CD14-positive monocyte (primary cell): ENCODE measurements at regions of chr2 and their contacts with region 1.

Region 1: DNA sequence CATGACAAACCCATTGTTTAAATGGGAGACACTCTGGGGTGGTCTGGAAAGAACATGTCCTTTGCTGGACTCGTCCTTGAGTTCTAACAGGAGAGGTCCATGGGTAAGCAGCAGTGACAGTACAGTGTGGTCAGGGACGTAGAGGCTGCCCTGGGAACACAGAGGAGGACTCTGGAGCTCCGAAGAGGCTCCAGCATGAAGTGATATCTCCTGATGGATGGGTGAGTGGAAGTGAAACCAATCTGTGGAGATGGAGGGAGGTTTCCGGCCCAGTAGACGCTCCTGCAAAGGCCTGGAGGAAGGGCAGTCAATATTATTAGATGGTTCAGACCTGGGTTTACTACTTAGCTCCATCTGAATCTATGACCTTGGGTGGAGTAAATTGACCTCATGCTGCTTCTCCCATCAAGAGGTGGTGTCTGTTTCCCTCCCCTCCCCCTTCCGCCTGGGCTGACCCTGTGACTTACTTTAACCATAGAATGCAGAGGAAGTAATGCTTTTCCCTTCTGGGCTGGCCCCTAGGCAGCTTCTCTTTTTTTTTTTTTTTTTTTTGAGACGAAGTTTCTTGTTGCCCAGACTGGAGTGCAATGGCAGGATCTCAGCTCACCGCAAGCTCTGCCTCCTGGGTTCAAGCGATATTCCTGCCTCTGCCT is 2.3 kb upstream of the TFCP2L1 start:
- DNase-seq: peak; percentile 71 to 76 (median 71)
- H3K4me3 ChIP-seq: peak overlapping the region in 2 of 3 experiments; percentile 7 to 56
- H3K4me3 Mint-ChIP-seq: peak overlapping the region; percentile 70 to 85
- H3K27ac ChIP-seq: peak overlapping the region; percentile 34 to 52
- H3K27ac Mint-ChIP-seq: peak overlapping the region; percentile 68 to 87 (median 84)
- H3K4me1 ChIP-seq: peaks cover 47 to 50% of the 10 kb centered on the region in 2 donors
- H3K4me1 Mint-ChIP-seq: peaks cover 57% of the 10 kb centered on the region
- H3K27me3 ChIP-seq: peaks cover 20 to 37% of the 10 kb centered on the region in 2 donors
- H3K27me3 Mint-ChIP-seq: peaks cover 36 to 44% (median 42%) of the 10 kb centered on the region in 3 donors
- CTCF ChIP-seq: no peak

Region 2: DNA sequence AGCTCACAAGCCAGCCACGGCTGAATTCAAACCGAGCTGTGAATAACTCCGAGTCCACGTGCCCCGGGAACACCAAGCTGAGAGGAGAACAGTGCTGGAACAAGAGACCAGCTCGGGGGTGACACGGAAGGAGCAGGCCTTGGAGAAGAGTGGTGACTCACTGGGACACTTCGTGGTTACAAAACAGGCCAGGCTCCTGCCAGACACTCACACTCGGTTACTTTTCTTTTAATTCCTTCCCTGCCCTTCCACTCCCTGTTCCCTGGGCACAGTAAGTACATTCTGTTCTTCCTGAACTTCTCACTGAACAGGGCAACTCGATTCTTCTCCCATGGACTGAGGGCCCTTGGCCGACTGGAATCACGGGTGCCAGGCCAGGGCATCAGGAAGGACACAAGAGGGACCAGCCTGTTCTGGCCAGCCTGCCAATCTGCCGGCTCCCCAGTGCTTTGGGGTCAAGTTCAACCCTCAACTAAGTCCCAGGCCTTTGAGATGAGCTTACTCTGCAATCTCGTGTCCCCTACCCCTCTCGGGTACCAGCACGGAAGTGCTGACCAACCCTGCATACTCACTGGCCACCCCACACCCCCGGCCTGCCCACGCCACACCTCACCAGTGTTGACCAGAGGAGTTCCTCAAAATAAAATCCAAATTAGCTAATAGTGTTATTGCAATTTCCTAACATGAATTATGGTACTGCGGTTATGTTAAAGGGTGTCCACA is 89.7 kb before region 1 on chr2:
- intact Hi-C with region 1: loop called in 1 of 2 experiments (anchors 2 kb)
- DNase-seq: peak; percentile 92 to 96 (median 93)
- H3K4me3 ChIP-seq: peak overlapping the region in 2 of 3 experiments; percentile 1 to 42
- H3K4me3 Mint-ChIP-seq: peak overlapping the region; percentile 58 to 84
- H3K27ac ChIP-seq: peak overlapping the region; percentile 100
- H3K27ac Mint-ChIP-seq: peak overlapping the region; percentile 99 to 100 (median 100)
- H3K4me1 ChIP-seq: peaks cover 51 to 72% of the 10 kb centered on the region in 2 donors
- H3K4me1 Mint-ChIP-seq: peaks cover 72% of the 10 kb centered on the region
- H3K27me3 ChIP-seq: no peaks in the 10 kb centered on the region
- H3K27me3 Mint-ChIP-seq: peaks cover 4 to 10% (median 8%) of the 10 kb centered on the region in 3 donors
- CTCF ChIP-seq: no peak

Region 3: DNA sequence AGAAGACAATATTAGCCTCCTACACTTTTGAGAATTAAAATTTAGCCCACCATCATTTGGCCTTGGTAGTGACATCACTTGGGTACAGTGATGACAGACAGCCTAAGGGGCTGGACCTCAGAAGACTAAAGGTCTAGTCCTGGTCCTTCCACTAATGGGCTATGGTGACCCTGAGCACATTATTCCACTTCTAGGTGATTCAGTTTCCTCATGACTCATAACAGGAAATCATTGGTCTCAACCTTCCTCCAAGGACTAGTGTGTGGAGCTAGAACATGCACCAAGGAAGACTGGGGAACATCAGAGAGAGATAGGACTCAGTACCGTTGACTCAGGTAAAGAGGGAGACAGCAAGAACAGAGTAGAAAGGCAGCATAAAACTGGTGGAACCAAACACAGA is 66.3 kb before region 1 on chr2:
- intact Hi-C with region 1: no loop called
- DNase-seq: peak in 2 of 3 donors; percentile 12 to 50
- H3K4me3 ChIP-seq: no peak overlapping the region
- H3K4me3 Mint-ChIP-seq: no peak overlapping the region
- H3K27ac ChIP-seq: no peak overlapping the region
- H3K27ac Mint-ChIP-seq: no peak overlapping the region
- H3K4me1 ChIP-seq: no peaks in the 10 kb centered on the region
- H3K4me1 Mint-ChIP-seq: peaks cover 3% of the 10 kb centered on the region
- H3K27me3 ChIP-seq: no peaks in the 10 kb centered on the region
- H3K27me3 Mint-ChIP-seq: peaks cover 2 to 5% (median 5%) of the 10 kb centered on the region in 3 donors
- CTCF ChIP-seq: no peak

Region 4: DNA sequence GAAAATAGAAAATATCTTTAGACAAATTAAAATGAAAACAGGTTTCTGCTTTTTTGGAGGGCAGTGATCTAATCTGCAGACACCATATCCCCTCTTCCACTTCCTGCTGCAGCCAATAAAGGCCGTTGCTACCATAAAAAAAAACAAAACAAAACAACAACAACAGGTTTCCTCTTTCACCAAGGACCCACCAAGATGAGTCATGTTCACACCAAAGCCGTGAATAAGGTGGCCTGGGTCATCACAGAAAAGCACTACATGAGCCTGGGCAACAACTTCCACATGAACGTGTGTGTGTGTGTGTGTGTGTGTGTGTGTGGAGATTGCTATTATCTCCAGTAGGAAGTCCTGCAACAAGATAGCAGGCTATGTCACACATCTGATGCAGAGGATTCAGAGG is 22.5 kb after region 1 on chr2:
- intact Hi-C with region 1: loop called in 1 of 2 experiments (anchors 2 kb)
- DNase-seq: peak; percentile 62 to 86 (median 74)
- H3K4me3 ChIP-seq: no peak overlapping the region
- H3K4me3 Mint-ChIP-seq: peak overlapping the region in 1 of 2 donors; percentile 14
- H3K27ac ChIP-seq: no peak overlapping the region
- H3K27ac Mint-ChIP-seq: peak overlapping the region in 4 of 7 donors; percentile 27 to 76 (median 47)
- H3K4me1 ChIP-seq: no peaks in the 10 kb centered on the region
- H3K4me1 Mint-ChIP-seq: peaks cover 8% of the 10 kb centered on the region
- H3K27me3 ChIP-seq: peaks cover 9 to 12% of the 10 kb centered on the region in 2 donors
- H3K27me3 Mint-ChIP-seq: peaks cover 16 to 34% (median 31%) of the 10 kb centered on the region in 3 donors
- CTCF ChIP-seq: no peak